A673 (cell line): ENCODE measurements at regions of chr14 and their contacts with region 1.

Region 1: DNA sequence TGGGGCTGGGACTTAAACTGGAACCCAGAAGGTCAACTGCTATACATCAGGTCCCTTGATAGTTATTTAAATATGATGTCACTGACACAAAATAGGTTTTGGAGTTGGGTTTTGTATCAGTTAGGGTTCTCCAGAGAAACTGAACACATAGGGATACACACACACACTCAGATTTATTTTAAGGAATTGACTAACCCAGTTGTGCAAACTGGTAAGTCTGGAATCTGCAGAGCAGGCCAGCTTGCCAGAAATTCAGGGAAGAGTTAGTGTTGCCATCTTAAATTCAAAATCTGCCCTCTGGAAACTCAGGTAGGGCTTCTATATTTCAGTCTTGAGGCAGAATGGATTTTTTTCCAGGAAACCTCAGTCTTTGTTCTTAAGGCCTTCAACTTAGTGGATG is 36.9 kb downstream of the MAPK1IP1L start:
- DNase-seq: no peak
- H3K4me3 ChIP-seq: no peak overlapping the region
- H3K27ac ChIP-seq: no peak overlapping the region
- H3K4me1 ChIP-seq: peaks cover 16% of the 10 kb centered on the region
- H3K27me3 ChIP-seq: no peaks in the 10 kb centered on the region
- CTCF ChIP-seq: no peak

Region 2: DNA sequence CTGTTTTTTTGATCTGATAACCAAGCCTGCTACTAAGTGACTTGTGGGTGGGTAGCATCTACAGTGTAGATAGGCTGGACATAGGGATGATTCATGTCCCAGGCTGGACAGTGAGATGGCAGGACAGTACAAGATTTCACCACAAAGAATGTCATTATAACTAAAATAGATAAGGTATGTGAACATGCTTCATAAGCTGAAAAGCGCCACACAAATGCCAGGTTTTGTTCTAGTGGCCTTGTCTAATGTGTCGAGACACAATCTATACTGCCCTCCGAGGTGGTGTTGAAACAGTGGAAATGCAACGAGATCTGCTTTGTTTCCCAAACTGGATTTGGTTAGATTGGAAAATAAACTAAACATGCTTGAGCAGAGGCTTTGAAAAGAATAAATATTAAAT is 45.1 kb after region 1 on chr14:
- CTCF ChIA-PET with region 1: no interaction called
- POLR2A ChIA-PET with region 1: no interaction called
- intact Hi-C with region 1: loop called (anchors 2 kb)
- DNase-seq: peak; percentile 63
- H3K4me3 ChIP-seq: no peak overlapping the region
- H3K27ac ChIP-seq: no peak overlapping the region
- H3K4me1 ChIP-seq: no peaks in the 10 kb centered on the region
- H3K27me3 ChIP-seq: no peaks in the 10 kb centered on the region
- CTCF ChIP-seq: peak; percentile 60

Region 3: DNA sequence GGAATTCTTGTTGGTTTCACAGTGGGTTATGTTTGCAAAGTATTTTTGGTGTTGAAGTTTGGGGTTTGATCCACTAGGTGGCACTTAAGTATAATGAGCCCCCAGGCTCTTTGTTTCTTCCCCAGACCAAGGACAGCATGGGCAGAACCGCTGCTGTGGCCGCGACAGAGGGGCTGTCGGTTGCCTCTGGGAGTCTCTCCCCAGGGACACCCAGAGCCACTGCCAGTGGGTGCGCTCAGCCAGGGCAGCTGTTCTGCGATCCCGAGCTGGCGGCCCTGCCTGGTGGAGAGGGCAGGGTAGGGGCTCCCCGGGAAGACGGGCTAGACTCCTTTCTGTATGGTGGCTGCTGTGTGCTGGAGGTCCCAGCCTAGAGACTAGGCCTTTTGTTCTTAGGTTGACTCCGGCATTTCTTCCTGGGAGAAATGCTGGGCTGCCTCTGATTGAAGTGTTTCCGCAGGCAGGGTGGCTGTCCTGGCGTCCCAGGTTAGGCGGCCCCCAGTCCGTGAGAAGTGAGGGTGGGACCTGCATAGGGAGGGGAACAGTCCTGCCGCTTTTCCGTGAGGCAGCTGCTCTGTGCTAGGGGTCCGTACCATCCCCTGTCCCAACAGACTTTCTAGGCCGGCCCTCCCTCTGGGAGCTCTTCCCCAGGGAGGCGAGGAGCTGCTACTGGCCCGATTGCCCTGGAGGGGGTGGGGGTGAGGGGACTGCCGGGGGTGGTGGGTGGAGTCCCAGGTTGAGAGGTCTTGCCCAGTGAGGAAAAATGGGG is 776.7 kb after region 1 on chr14:
- CTCF ChIA-PET with region 1: no interaction called
- POLR2A ChIA-PET with region 1: no interaction called
- intact Hi-C with region 1: no loop called
- DNase-seq: peak; percentile 10
- H3K4me3 ChIP-seq: no peak overlapping the region
- H3K27ac ChIP-seq: no peak overlapping the region
- H3K4me1 ChIP-seq: no peaks in the 10 kb centered on the region
- H3K27me3 ChIP-seq: no peaks in the 10 kb centered on the region
- CTCF ChIP-seq: no peak